ENCODE measurements at regions of chr7 and their contacts with region 1.

Region 1: GRCh38 chr7:1086588-1087464 is 1.1 kb upstream of the GPER1 start:
- DNase-seq: peak; percentile 73
- ATAC-seq: peak; percentile 60
- H3K4me3 ChIP-seq: peak overlapping the region; percentile 70
- H3K27ac ChIP-seq: peak overlapping the region; percentile 57
- H3K4me1 ChIP-seq: peaks cover 31% of the 10 kb centered on the region
- H3K27me3 ChIP-seq: no peaks in the 10 kb centered on the region
- CTCF ChIP-seq: peak; percentile 95

Region 2: DNA sequence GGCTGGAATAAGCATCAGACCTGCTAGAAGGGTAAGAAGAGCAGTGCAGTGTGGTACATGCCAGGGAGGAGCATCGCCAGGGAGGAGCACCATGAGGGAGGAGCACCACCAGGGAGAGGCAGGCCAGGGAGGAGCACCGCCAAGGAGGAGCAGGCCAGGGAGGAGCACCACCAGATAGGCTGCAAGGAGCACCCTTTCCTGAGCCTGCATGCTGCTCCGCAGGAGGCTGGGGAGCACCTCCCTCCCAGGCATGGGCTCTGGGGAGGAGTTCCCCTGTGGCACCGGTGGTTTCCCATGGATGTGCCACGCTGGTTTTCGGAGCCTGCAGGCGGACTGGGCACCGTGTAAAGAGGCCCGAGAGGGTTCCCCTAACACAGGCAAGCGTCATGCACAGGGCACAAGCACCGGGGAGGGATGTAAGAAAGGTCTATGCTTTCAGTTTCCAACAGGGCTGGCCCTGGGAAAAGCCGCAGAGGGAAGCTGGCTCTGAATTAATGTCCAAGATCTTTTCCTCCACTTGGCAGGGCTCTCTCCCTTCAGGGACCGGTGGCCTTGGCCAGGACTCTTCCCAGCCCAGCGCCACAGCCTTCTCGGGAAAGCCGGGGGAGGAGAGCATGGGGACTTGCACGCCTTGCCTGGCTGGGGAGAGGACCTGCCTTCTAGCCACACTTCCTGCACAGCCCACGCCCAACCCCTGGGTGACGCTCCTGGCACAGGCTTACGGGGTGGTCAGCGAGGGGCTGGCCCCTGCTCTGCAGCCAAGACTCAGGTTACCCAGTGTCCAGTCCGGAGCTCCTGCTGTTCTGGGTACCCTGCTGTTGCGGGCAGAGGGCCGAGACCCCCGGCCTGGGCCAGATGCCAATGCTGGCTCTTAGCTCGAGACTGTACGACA is 10.4 kb before region 1 on chr7:
- CTCF ChIA-PET with region 1: interaction called, 15 read pairs
- POLR2A ChIA-PET with region 1: no interaction called
- intact Hi-C with region 1: no loop called
- DNase-seq: no peak
- ATAC-seq: peak; percentile 49
- H3K4me3 ChIP-seq: no peak overlapping the region
- H3K27ac ChIP-seq: no peak overlapping the region
- H3K4me1 ChIP-seq: no peaks in the 10 kb centered on the region
- H3K27me3 ChIP-seq: no peaks in the 10 kb centered on the region
- CTCF ChIP-seq: no peak

Region 3: GRCh38 chr7:1144269-1144771 is 57.5 kb after region 1 on chr7:
- CTCF ChIA-PET with region 1: interaction called, 5 read pairs
- POLR2A ChIA-PET with region 1: interaction called, 4 read pairs
- intact Hi-C with region 1: loop called (anchors 2 kb)
- DNase-seq: peak; percentile 54
- ATAC-seq: peak; percentile 96
- H3K4me3 ChIP-seq: no peak overlapping the region
- H3K27ac ChIP-seq: no peak overlapping the region
- H3K4me1 ChIP-seq: no peaks in the 10 kb centered on the region
- H3K27me3 ChIP-seq: no peaks in the 10 kb centered on the region
- CTCF ChIP-seq: peak; percentile 48

Region 4: DNA sequence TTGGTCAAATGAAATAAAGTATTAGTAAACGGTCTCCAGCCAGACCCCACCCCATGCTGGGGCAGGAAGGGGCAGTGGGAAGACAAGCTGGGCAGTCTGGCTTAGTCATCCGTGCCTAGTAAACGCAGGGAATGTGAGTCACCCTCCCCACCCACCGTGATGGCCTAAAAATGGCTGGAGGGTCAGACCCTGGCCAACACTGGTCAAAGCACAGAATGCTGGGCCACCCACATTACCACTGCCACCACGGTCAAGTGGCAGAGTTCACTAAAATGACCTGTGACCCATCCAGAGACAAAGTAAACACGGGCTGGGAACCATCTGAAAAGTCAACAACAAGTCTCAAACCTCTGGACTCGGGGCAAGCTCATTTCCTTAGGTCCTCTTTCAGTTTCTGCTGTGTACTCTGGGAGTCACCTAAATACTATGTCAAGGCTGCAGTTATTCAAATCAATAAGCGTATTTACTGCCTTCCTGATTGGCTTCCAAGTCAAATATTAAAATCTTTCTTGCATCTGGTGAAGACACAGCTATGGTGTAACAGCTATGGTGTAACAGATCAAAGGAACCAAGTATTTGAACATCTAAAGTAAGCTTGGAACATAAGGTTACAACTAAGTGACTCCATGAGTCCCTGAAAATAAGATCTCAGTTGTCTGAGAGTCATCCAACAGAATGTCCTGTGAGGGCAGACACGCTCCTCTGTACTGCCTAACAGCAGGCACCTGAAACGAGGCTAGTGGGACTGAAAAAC is 70.1 kb after region 1 on chr7:
- CTCF ChIA-PET with region 1: no interaction called
- POLR2A ChIA-PET with region 1: no interaction called
- intact Hi-C with region 1: loop called (anchors 1 kb)
- DNase-seq: peak; percentile 84
- ATAC-seq: peak; percentile 67
- H3K4me3 ChIP-seq: peak overlapping the region; percentile 88; the same call in 1 of the 2 replicates
- H3K27ac ChIP-seq: peak overlapping the region; percentile 87
- H3K4me1 ChIP-seq: peaks cover 28% of the 10 kb centered on the region
- H3K27me3 ChIP-seq: no peaks in the 10 kb centered on the region
- CTCF ChIP-seq: no peak

Region 5: DNA sequence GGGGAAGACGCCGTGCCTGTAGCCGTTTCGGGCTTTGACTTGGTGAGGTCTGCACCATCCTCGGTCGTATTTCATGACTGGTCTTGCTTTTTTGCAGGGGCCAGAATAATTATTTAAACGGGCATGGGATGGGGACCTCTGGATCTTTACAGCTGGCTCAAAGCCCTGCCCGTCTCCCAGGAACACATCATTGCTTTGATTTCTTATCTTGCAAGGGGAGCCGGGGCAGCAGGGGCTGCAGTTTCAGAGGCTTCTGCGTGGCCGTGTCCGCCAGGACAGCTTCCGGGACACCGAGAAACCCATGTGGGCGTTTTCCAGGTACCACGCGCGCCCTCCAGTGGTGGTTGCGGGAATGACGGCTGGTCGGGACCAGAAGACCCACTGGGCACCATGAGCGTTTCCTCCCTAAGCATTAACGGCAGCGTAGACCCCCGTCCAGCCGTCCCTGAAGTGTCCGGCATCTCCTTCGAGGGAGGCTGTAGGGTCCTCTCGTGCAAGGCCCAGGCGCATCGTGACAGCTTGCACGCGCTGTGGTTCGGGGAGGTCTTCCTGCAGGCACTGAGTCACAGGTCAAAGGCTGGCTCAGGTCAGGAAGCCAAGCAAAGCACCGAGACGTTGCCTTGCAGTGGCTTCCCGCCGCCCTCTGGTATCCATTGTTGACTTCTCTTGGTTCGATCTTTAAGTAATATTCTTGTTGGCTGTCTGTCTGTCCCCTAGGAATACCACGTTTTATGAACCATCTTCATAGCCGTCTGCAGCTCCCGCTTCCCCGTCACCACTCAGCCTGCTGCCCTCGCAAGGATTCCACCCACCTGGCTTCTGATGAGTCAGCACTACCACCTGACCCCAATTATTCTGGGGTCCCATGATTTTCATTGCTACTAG is 89.4 kb after region 1 on chr7:
- CTCF ChIA-PET with region 1: interaction called, 15 read pairs
- POLR2A ChIA-PET with region 1: no interaction called
- intact Hi-C with region 1: loop called (anchors 5 kb)
- DNase-seq: peak; percentile 88
- ATAC-seq: peak; percentile 89
- H3K4me3 ChIP-seq: peak overlapping the region; percentile 59
- H3K27ac ChIP-seq: no peak overlapping the region
- H3K4me1 ChIP-seq: peaks cover 7% of the 10 kb centered on the region; the same call in 1 of the 2 replicates
- H3K27me3 ChIP-seq: no peaks in the 10 kb centered on the region
- CTCF ChIP-seq: peak; percentile 85

Region 6: GRCh38 chr7:1187127-1187526 is 100.3 kb after region 1 on chr7:
- CTCF ChIA-PET with region 1: no interaction called
- POLR2A ChIA-PET with region 1: no interaction called
- intact Hi-C with region 1: no loop called
- DNase-seq: no peak
- ATAC-seq: no peak
- H3K4me3 ChIP-seq: no peak overlapping the region
- H3K27ac ChIP-seq: no peak overlapping the region
- H3K4me1 ChIP-seq: no peaks in the 10 kb centered on the region
- H3K27me3 ChIP-seq: peaks cover 21% of the 10 kb centered on the region
- CTCF ChIP-seq: no peak